ENCODE measurements at regions of chr6 and their contacts with region 1.

Region 1: GRCh38 chr6:73520688-73521350 is at the start of gene EEF1A1:
- DNase-seq: peak; percentile 100
- ATAC-seq: peak; percentile 80
- H3K4me3 Mint-ChIP-seq: peak within 1 kb of the TSS; percentile 97
- H3K27ac Mint-ChIP-seq: peak within 1 kb of the TSS; percentile 98
- H3K4me1 Mint-ChIP-seq: peaks cover 25% of the 10 kb centered on the region
- H3K27me3 Mint-ChIP-seq: no peaks in the 10 kb centered on the region
- total RNA-seq, gene EEF1A1: 11,209 to 15,482 TPM

Region 2: DNA sequence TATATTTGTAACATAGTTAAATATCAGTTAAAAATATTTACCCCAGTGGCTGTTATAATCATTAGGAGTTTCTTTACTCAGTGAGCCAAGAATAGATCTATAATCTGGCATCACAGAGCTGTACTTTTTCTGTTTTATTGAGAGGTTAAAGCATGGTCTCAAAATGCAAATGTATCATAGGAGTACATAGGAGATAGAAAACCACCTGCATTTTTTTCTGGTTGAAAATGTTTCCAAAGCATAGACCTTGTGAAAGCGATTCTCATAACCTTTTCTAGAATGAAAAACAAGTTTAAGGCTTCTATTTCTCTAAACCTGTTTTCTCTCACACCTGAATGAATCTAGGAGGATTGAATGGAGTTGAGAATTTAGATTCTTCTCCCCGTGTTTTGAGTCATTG is 884.6 kb before region 1 on chr6:
- CTCF ChIA-PET with region 1: no interaction called
- POLR2A ChIA-PET with region 1: no interaction called
- intact Hi-C with region 1: no loop called
- DNase-seq: no peak
- ATAC-seq: no peak
- H3K4me3 Mint-ChIP-seq: no peak overlapping the region
- H3K27ac Mint-ChIP-seq: no peak overlapping the region
- H3K4me1 Mint-ChIP-seq: no peaks in the 10 kb centered on the region
- H3K27me3 Mint-ChIP-seq: peaks cover 2% of the 10 kb centered on the region

Region 3: GRCh38 chr6:73451223-73452107 is 69.4 kb before region 1 on chr6:
- CTCF ChIA-PET with region 1: interaction called, 3 read pairs
- POLR2A ChIA-PET with region 1: interaction called, 10 read pairs
- intact Hi-C with region 1: loop called in 1 of 2 experiments (anchors 1 kb)
- DNase-seq: peak; percentile 66
- ATAC-seq: peak; percentile 55
- H3K4me3 Mint-ChIP-seq: peak overlapping the region; percentile 87
- H3K27ac Mint-ChIP-seq: peak overlapping the region; percentile 90
- H3K4me1 Mint-ChIP-seq: peaks cover 32% of the 10 kb centered on the region
- H3K27me3 Mint-ChIP-seq: no peaks in the 10 kb centered on the region

Region 4: DNA sequence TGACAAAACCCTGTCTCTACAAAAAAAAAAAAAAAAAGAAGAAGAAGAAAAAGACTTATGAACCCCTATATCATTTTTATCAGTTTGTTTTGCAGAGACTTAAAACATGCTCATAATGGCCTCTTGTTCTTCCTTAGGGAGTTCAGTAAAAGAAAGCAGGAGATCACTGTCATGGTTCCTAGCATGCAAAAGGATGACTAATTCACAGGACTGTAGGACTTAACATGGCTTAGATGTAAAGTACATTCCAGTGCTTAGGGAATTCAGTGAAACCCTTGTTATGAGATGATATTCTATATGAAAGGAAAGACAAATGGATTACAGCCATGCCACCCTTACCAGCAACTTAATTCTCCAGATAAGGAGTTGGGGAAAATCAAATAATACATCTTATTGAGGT is 29.4 kb before region 1 on chr6:
- CTCF ChIA-PET with region 1: no interaction called
- POLR2A ChIA-PET with region 1: no interaction called
- intact Hi-C with region 1: no loop called
- DNase-seq: no peak
- ATAC-seq: no peak
- H3K4me3 Mint-ChIP-seq: no peak overlapping the region
- H3K27ac Mint-ChIP-seq: no peak overlapping the region
- H3K4me1 Mint-ChIP-seq: no peaks in the 10 kb centered on the region
- H3K27me3 Mint-ChIP-seq: no peaks in the 10 kb centered on the region

Region 5: GRCh38 chr6:73580247-73581149 is 59.7 kb after region 1 on chr6:
- CTCF ChIA-PET with region 1: interaction called, 10 read pairs
- POLR2A ChIA-PET with region 1: interaction called, 28 read pairs
- intact Hi-C with region 1: loop called (anchors 1 kb)
- DNase-seq: peak; percentile 89
- ATAC-seq: peak; percentile 92
- H3K4me3 Mint-ChIP-seq: peak overlapping the region; percentile 60
- H3K27ac Mint-ChIP-seq: peak overlapping the region; percentile 99
- H3K4me1 Mint-ChIP-seq: peaks cover 29% of the 10 kb centered on the region
- H3K27me3 Mint-ChIP-seq: no peaks in the 10 kb centered on the region

Region 6: GRCh38 chr6:73610444-73611275 is 89.8 kb after region 1 on chr6:
- CTCF ChIA-PET with region 1: interaction called, 28 read pairs
- POLR2A ChIA-PET with region 1: interaction called, 6 read pairs
- intact Hi-C with region 1: loop called in 1 of 2 experiments (anchors 2 kb)
- DNase-seq: no peak
- ATAC-seq: peak; percentile 51
- H3K4me3 Mint-ChIP-seq: no peak overlapping the region
- H3K27ac Mint-ChIP-seq: no peak overlapping the region
- H3K4me1 Mint-ChIP-seq: peaks cover 7% of the 10 kb centered on the region
- H3K27me3 Mint-ChIP-seq: no peaks in the 10 kb centered on the region

Region 7: GRCh38 chr6:75243333-75244062 is 1722.7 kb after region 1 on chr6 and contains the start of gene COX7A2:
- CTCF ChIA-PET with region 1: no interaction called
- POLR2A ChIA-PET with region 1: no interaction called
- intact Hi-C with region 1: loop called (anchors 5 kb)
- DNase-seq: peak; percentile 91
- ATAC-seq: peak; percentile 97
- H3K4me3 Mint-ChIP-seq: peak within 1 kb of the TSS; percentile 91
- H3K27ac Mint-ChIP-seq: peak within 1 kb of the TSS; percentile 95
- H3K4me1 Mint-ChIP-seq: peaks cover 35% of the 10 kb centered on the region
- H3K27me3 Mint-ChIP-seq: peaks cover 12% of the 10 kb centered on the region
- total RNA-seq, gene COX7A2: 468 to 520 TPM